Motor neuron (in vitro differentiated cells): ENCODE measurements at regions of chr15 and their contacts with region 1.

Region 1: GRCh38 chr15:85858586-85859375 is 64.1 kb upstream of the KLHL25 start:
- ATAC-seq: peak; percentile 89 to 96 (median 93)
- H3K4me3 ChIP-seq: peak overlapping the region; percentile 16 to 25 (median 17)
- H3K27ac ChIP-seq: no peak overlapping the region
- H3K4me1 ChIP-seq: no peaks in the 10 kb centered on the region

Region 2: GRCh38 chr15:85554852-85555521 is 303.8 kb before region 1 on chr15:
- in situ Hi-C with region 1: no loop called
- ATAC-seq: no peak
- H3K4me3 ChIP-seq: no peak overlapping the region
- H3K27ac ChIP-seq: no peak overlapping the region
- H3K4me1 ChIP-seq: no peaks in the 10 kb centered on the region

Region 3: GRCh38 chr15:86193716-86194380 is 335.1 kb after region 1 on chr15:
- in situ Hi-C with region 1: no loop called
- ATAC-seq: no peak
- H3K4me3 ChIP-seq: no peak overlapping the region
- H3K27ac ChIP-seq: no peak overlapping the region
- H3K4me1 ChIP-seq: no peaks in the 10 kb centered on the region

Region 4: GRCh38 chr15:86213420-86214287 is 354.9 kb after region 1 on chr15:
- in situ Hi-C with region 1: loop called in 2 of 9 experiments (anchors 25 kb)
- ATAC-seq: no peak
- H3K4me3 ChIP-seq: no peak overlapping the region
- H3K27ac ChIP-seq: no peak overlapping the region
- H3K4me1 ChIP-seq: no peaks in the 10 kb centered on the region

Region 5: DNA sequence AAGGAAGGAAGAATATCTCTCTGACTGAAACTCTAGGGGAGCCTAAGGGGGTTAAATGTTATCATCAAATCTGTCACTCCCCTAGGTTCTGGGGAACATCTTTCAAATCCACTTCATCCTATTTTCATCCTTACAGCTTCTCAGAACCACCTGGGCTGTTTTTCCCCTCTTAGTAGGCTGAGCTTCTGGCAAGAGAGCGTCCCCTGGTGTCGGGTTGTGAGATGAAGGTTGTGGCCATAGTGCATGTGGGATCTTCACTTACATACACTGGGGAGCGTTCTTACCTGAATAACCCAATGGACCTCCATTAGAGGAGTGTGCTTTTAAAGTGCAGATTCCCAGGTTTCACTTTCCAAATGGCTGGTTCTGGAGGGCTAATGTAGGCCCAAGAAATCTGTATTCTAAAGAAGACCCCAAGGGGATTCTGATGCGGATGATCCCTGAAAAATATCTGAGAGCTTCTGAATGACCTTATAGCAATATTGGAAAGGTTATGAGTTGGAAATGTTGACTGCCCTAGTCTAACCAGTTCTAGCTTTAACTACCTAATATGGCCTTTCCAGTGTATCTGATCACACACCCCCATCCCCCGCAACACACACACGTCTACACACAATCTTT is 884.6 kb after region 1 on chr15:
- in situ Hi-C with region 1: loop called in 1 of 9 experiments (anchors 25 kb)
- ATAC-seq: peak in 3 of 8 experiments; percentile 34 to 66 (median 39)
- H3K4me3 ChIP-seq: no peak overlapping the region
- H3K27ac ChIP-seq: no peak overlapping the region
- H3K4me1 ChIP-seq: peaks cover 27 to 61% of the 10 kb centered on the region in 2 donors